ENCODE measurements at regions of chr4 and their contacts with region 1.

Region 1: GRCh38 chr4:142801966-142802365 is 44.1 kb downstream of the INPP4B start:
- DNase-seq: peak; percentile 17 to 55
- H3K4me3 ChIP-seq: no peak overlapping the region
- H3K27ac ChIP-seq: no peak overlapping the region
- H3K4me1 ChIP-seq: no peaks in the 10 kb centered on the region; the same call in 1 of the 2 replicates
- H3K27me3 ChIP-seq: no peaks in the 10 kb centered on the region
- CTCF ChIP-seq: no peak

Region 2: DNA sequence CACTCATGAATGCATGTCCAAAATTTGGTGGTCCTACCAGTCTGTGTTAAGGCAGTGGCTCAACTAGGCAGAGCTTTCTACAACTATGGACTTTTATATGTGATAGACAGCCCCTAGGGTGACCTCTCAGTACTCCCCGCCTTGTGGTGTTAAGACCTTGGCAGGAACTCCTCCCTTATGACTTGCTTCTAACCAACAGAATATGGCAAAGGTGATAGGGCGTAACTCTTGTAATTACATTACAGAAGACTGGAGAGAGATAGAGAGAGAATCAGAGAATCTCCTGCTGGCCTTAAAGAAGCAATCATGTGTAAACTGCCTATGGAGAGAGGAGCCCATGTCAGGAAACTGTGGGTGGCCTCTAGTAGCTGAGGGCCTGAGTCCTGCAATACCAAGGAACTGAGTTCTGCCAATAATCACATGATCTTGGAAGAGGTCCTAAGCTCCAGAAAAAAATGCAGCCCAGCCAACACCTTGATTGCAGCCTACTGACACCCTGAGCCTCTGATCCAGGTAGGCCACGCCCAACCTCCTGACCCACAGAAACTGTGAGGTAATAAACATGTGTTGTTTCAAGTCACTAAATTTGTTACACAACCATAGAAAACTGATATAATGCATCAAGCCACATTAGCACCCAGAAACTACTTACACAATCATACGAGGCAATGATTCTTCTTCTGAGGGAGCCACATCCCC is 24.8 kb before region 1 on chr4:
- CTCF ChIA-PET with region 1: no interaction called
- POLR2A ChIA-PET with region 1: no interaction called
- intact Hi-C with region 1: loop called (anchors 1 kb)
- DNase-seq: peak; percentile 3 to 40
- H3K4me3 ChIP-seq: no peak overlapping the region
- H3K27ac ChIP-seq: peak overlapping the region; percentile 26; the same call in 1 of the 2 replicates
- H3K4me1 ChIP-seq: peaks cover 6% of the 10 kb centered on the region; the same call in 1 of the 2 replicates
- H3K27me3 ChIP-seq: no peaks in the 10 kb centered on the region
- CTCF ChIP-seq: no peak

Region 3: GRCh38 chr4:142850476-142850875 is 48.5 kb after region 1 on chr4:
- CTCF ChIA-PET with region 1: no interaction called
- POLR2A ChIA-PET with region 1: no interaction called
- intact Hi-C with region 1: no loop called
- DNase-seq: no peak
- H3K4me3 ChIP-seq: no peak overlapping the region
- H3K27ac ChIP-seq: no peak overlapping the region
- H3K4me1 ChIP-seq: no peaks in the 10 kb centered on the region; the same call in 1 of the 2 replicates
- H3K27me3 ChIP-seq: no peaks in the 10 kb centered on the region
- CTCF ChIP-seq: peak; percentile 56

Region 4: DNA sequence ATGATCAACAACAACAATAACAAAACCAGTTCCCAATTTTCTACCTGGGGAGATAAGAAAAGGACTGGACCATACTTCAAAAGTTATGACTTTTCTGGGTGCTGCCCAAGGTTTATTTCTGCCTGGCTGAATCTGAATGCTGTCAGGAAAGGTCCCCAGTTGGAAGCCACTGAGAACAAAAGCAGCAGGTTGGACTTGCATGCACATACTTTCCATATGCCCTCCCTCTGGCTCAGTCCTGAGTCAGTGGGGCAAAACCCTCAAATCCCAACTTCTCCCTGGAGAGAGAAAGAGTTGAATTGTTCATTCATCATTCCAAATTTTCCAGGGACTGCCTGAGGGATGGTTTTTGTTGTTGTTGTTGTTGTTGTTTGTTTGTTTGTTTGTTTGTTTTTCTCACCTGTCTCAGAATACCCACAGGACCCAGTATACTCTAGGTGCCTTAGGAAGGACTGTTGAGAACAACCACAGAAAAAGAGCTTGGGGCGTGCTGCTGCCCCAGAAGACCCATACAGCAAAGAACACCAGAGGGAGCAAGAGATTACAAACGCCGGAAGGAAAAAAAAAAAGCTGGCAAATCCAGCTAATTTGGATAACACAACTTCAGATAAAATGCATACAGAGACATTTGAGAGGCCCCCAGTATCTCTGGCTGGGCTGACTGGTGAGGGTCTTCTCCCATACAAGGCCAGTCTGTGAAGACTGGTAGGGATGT is 183.1 kb after region 1 on chr4:
- CTCF ChIA-PET with region 1: no interaction called
- POLR2A ChIA-PET with region 1: no interaction called
- intact Hi-C with region 1: no loop called
- DNase-seq: peak in 1 of 2 experiments; percentile 8
- H3K4me3 ChIP-seq: no peak overlapping the region
- H3K27ac ChIP-seq: no peak overlapping the region
- H3K4me1 ChIP-seq: no peaks in the 10 kb centered on the region
- H3K27me3 ChIP-seq: no peaks in the 10 kb centered on the region
- CTCF ChIP-seq: peak; percentile 57

Region 5: GRCh38 chr4:143099693-143100092 is 297.7 kb after region 1 on chr4:
- CTCF ChIA-PET with region 1: no interaction called
- POLR2A ChIA-PET with region 1: no interaction called
- intact Hi-C with region 1: no loop called
- DNase-seq: no peak
- H3K4me3 ChIP-seq: no peak overlapping the region
- H3K27ac ChIP-seq: no peak overlapping the region
- H3K4me1 ChIP-seq: no peaks in the 10 kb centered on the region
- H3K27me3 ChIP-seq: no peaks in the 10 kb centered on the region
- CTCF ChIP-seq: no peak

Region 6: DNA sequence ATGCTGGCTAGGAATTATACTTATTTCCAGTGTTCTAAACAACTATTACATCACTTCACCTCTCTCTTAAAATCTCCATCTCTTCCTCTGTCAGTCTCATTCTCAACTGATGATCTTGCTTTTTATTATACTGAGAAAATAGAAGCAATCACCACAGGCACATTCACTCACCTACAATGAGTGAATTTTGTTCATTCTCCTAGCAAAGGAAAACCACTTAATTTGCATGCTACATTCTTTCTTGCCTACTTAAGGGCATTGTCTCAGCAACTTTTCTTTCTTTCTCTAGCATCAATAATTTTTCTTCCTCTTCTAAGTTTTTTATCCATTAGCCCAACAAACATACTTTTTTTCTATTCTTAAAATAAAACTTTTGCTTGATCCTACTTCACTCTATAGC is 361.7 kb after region 1 on chr4:
- CTCF ChIA-PET with region 1: no interaction called
- POLR2A ChIA-PET with region 1: no interaction called
- intact Hi-C with region 1: no loop called
- DNase-seq: no peak
- H3K4me3 ChIP-seq: no peak overlapping the region
- H3K27ac ChIP-seq: no peak overlapping the region
- H3K4me1 ChIP-seq: no peaks in the 10 kb centered on the region
- H3K27me3 ChIP-seq: no peaks in the 10 kb centered on the region
- CTCF ChIP-seq: no peak